Activated CD4-positive, alpha-beta T cell treated with anti-CD3 and anti-CD28 coated beads, Interleukin-2, amount 10 ng/mL, durations not matched to agents 7 days and 5 days (primary cell): ENCODE measurements at regions of chrX and their contacts with region 1.

Region 1: DNA sequence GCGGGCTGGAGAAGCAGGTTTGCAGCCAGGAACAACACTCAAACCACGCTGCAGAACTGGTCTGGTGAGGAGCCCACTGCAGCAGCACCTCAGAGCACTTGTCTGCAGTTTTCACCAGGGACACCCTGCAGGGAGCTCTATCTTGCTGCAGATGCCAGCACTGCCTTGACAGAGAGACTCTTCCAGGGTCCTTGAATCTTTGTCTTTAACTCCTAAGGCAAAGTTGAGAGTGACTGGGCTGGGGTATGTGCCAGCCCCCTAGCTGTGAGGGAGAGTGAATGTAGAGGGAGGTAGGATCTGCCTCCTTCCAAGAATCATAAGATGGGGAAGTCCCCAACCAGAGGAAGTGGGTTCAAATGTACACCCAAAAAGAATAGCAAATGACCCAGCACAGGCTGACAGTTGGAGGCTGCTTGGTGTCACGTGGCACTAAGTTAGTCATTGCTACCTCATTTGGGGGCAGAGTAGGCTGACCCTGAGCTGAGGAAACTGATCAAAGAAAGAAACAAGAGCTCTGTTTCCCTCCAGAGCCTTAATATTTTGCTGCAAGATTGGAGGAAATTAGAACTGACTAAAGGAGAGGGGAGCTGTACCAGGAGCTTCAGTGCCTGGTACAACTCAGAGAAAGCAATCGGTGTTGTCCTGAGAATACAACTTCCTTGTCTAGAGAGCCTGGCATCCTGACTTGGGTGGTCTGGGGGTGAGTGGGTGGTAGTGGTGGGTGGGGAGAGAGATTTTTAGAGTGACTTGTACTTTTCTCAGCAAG is 28.2 kb upstream of the HUWE1 start:
- DNase-seq: peak; percentile 77
- H3K4me3 Mint-ChIP-seq: peak overlapping the region; percentile 76
- H3K27ac Mint-ChIP-seq: peak overlapping the region; percentile 99
- H3K4me1 Mint-ChIP-seq: peaks cover 60% of the 10 kb centered on the region
- H3K27me3 Mint-ChIP-seq: no peaks in the 10 kb centered on the region

Region 2: GRCh38 chrX:53683556-53684414 is 31.0 kb before region 1 on chrX:
- CTCF ChIA-PET with region 1: interaction called, 7 read pairs
- POLR2A ChIA-PET with region 1: interaction called, 19 read pairs
- DNase-seq: peak; percentile 93
- H3K4me3 Mint-ChIP-seq: peak overlapping the region; percentile 78
- H3K27ac Mint-ChIP-seq: peak overlapping the region; percentile 97
- H3K4me1 Mint-ChIP-seq: peaks cover 29% of the 10 kb centered on the region
- H3K27me3 Mint-ChIP-seq: no peaks in the 10 kb centered on the region